ENCODE measurements at regions of chr2 and their contacts with region 1.

Region 1: GRCh38 chr2:235135990-235136561 is 184.3 kb downstream of the SH3BP4 start:
- DNase-seq: peak; percentile 9
- H3K4me3 ChIP-seq: no peak overlapping the region
- CTCF ChIP-seq: peak; percentile 93

Region 2: GRCh38 chr2:235149240-235149659 is 13.2 kb after region 1 on chr2:
- CTCF ChIA-PET with region 1: interaction called, 66 read pairs
- POLR2A ChIA-PET with region 1: no interaction called
- DNase-seq: no peak
- H3K4me3 ChIP-seq: no peak overlapping the region
- CTCF ChIP-seq: no peak

Region 3: GRCh38 chr2:235588750-235589149 is 452.7 kb after region 1 on chr2:
- CTCF ChIA-PET with region 1: interaction called, 340 read pairs
- POLR2A ChIA-PET with region 1: no interaction called
- DNase-seq: no peak
- H3K4me3 ChIP-seq: no peak overlapping the region
- CTCF ChIP-seq: no peak

Measured in AG04449 (cell line).